ENCODE measurements at regions of chr15 and their contacts with region 1.

Region 1: DNA sequence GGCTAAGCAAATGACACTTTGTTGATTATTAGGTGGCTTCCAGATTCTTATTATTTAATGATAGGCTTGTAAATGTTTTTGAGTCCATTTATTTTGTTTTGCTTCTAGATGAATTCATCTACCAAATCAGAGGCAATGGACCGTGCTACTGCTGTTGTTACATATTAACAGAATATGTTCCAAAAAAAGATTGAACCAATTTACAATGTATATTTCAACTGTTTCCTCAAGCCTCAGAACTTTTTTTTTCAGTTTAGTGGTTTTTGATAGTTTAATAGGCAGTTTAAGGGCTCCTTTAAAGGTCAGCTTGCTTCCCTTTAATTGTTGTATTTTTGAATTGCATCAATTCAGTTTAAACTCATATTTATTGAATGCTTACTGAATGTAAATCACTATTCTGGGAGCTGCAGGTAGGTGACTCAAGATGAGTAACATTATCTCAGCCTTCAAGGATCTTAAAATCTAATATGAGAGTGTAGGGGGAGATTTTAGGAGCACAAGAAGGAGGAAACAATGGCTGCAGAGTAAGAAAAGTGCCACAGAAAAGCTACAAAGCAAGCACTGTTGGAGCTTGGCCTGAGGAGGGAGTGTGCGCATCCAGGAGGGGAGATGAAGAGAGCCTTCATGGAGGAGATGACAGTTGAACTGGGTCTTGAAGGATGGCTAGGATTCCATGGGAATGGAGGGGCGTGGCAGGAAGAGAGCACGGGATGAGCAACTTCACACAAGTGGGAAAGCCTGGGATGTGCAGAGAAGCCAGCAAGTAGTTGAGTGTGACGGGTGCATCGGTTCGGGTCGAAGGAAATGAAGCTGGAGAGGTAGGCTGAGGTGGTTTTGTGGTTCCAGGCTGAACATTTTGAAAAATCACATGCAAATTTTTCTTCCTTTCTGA is 14.7 kb downstream of the MAP2K1 start:
- DNase-seq: no peak
- ATAC-seq: peak; percentile 72
- H3K4me3 ChIP-seq: peak overlapping the region; percentile 64; the same call in 1 of the 2 replicates
- H3K27ac ChIP-seq: peak overlapping the region; percentile 74; the same call in 1 of the 2 replicates
- H3K4me1 ChIP-seq: peaks cover 55% of the 10 kb centered on the region
- H3K27me3 ChIP-seq: no peaks in the 10 kb centered on the region
- CTCF ChIP-seq: peak; percentile 18 to 36 (median 30); a peak in 4 of 6 replicates
- EP300 ChIP-seq: no peak
- POLR2A ChIP-seq: no peak
- RAD21 ChIP-seq: peak; percentile 27; the same call in 1 of the 2 replicates

Region 2: GRCh38 chr15:66424963-66425612 is 23.7 kb after region 1 on chr15:
- CTCF ChIA-PET with region 1: interaction called, 18 read pairs
- POLR2A ChIA-PET with region 1: interaction called, 72 read pairs
- RAD21 ChIA-PET with region 1: interaction called, 38 read pairs
- SMC1A ChIA-PET with region 1: interaction called, 52 read pairs
- in situ Hi-C with region 1: no loop called
- intact Hi-C with region 1: no loop called
- DNase-seq: no peak
- ATAC-seq: peak; percentile 58
- H3K4me3 ChIP-seq: peak overlapping the region; percentile 3; the same call in 1 of the 2 replicates
- H3K27ac ChIP-seq: peak overlapping the region; percentile 70
- H3K4me1 ChIP-seq: peaks cover 51% of the 10 kb centered on the region
- H3K27me3 ChIP-seq: no peaks in the 10 kb centered on the region
- CTCF ChIP-seq: no peak
- EP300 ChIP-seq: no peak; a peak in 1 of 4 replicates
- POLR2A ChIP-seq: no peak
- RAD21 ChIP-seq: no peak

Region 3: DNA sequence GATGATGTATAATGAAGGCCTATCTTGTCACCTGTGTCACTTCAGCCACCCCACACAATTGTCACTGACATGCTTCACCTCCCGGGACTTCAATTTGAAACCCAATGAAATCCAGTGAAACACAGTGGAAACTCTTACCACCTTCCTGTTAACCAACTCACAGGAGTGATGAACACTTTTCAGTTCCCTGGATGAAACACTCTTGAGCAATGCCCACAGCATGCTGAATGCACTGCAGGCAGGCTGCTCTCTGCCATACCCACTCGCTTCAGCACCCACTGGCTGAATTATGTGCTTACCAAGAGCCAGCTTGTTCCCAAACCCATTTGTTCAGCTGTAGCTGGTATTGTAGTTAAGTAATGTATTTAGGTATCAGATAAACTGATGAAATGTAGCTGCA is 32.4 kb after region 1 on chr15:
- CTCF ChIA-PET with region 1: interaction called, 5 read pairs
- POLR2A ChIA-PET with region 1: interaction called, 72 read pairs
- RAD21 ChIA-PET with region 1: interaction called, 19 read pairs
- SMC1A ChIA-PET with region 1: interaction called, 27 read pairs
- in situ Hi-C with region 1: no loop called
- intact Hi-C with region 1: no loop called
- DNase-seq: no peak
- ATAC-seq: no peak; the same call in 2 of the 3 replicates
- H3K4me3 ChIP-seq: no peak overlapping the region
- H3K27ac ChIP-seq: no peak overlapping the region
- H3K4me1 ChIP-seq: peaks cover 36% of the 10 kb centered on the region
- H3K27me3 ChIP-seq: no peaks in the 10 kb centered on the region
- CTCF ChIP-seq: no peak
- EP300 ChIP-seq: no peak
- POLR2A ChIP-seq: no peak
- RAD21 ChIP-seq: no peak

Region 4: GRCh38 chr15:66472176-66472999 is 71.0 kb after region 1 on chr15:
- CTCF ChIA-PET with region 1: interaction called, 13 read pairs
- POLR2A ChIA-PET with region 1: interaction called, 14 read pairs
- RAD21 ChIA-PET with region 1: interaction called, 22 read pairs
- SMC1A ChIA-PET with region 1: interaction called, 18 read pairs
- in situ Hi-C with region 1: no loop called
- intact Hi-C with region 1: no loop called
- DNase-seq: peak; percentile 78
- ATAC-seq: peak; percentile 94
- H3K4me3 ChIP-seq: no peak overlapping the region
- H3K27ac ChIP-seq: peak overlapping the region; percentile 69
- H3K4me1 ChIP-seq: peaks cover 35% of the 10 kb centered on the region
- H3K27me3 ChIP-seq: no peaks in the 10 kb centered on the region
- CTCF ChIP-seq: no peak
- EP300 ChIP-seq: no peak
- POLR2A ChIP-seq: no peak
- RAD21 ChIP-seq: no peak

Region 5: DNA sequence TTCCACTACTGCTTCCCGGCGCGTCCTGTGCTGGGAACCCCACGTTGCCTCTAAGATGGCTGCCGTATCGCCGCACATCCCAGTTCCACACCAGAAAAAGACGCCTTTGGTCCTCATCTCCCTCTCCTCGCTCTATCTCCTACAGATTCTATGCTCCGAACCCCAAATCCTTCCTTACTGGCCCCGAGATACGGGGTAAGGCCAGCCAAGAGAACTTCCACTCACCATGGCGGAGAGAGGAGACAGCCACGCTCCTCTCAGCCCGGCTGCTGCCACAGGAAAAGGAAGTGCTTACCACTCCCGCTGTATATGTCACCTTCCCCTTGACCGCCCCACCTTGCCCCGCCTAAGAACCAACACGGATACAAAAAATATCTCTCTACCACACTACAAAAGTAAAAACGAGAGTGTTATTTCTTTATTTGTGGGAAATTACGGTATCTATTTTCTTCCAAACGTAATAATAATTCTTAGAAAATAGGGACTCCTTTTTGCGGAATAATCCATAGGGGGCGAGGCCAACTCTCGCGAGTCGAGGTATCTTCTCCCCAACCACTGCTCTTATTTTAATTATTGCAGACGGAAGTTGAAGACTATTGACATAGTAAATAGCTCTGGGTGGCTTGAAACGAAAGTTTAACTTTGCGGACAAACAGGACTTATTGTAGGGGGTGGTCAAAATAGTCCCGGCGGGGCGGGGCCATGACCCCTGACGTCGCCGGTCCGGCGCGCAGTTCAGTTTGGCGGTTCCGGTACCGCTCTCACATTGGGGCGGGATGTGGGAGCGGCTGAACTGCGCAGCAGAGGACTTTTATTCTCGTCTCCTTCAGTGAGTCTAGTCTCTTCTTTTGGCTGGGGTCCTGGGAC is 103.4 kb after region 1 on chr15 and contains the starts of genes RPL4 and ZWILCH:
- CTCF ChIA-PET with region 1: no interaction called
- POLR2A ChIA-PET with region 1: interaction called, 4 read pairs
- RAD21 ChIA-PET with region 1: interaction called, 18 read pairs
- SMC1A ChIA-PET with region 1: interaction called, 10 read pairs
- in situ Hi-C with region 1: no loop called
- intact Hi-C with region 1: no loop called
- DNase-seq: peak; percentile 78
- ATAC-seq: peak; percentile 83
- H3K4me3 ChIP-seq: peak within 1 kb of the TSS; percentile 99
- H3K27ac ChIP-seq: peak within 1 kb of the TSS; percentile 97
- H3K4me1 ChIP-seq: peaks cover 4% of the 10 kb centered on the region; the same call in 1 of the 2 replicates
- H3K27me3 ChIP-seq: no peaks in the 10 kb centered on the region
- CTCF ChIP-seq: no peak
- EP300 ChIP-seq: no peak
- POLR2A ChIP-seq: peak; percentile 98
- RAD21 ChIP-seq: no peak
- polyA plus RNA-seq, gene RPL4: 3,668 to 5,406 TPM
- polyA plus RNA-seq, gene ZWILCH: 34.4 to 51.6 TPM